Thyroid gland (tissue), 4 donors: ENCODE measurements at regions of chr11 and their contacts with region 1.

Region 1: DNA sequence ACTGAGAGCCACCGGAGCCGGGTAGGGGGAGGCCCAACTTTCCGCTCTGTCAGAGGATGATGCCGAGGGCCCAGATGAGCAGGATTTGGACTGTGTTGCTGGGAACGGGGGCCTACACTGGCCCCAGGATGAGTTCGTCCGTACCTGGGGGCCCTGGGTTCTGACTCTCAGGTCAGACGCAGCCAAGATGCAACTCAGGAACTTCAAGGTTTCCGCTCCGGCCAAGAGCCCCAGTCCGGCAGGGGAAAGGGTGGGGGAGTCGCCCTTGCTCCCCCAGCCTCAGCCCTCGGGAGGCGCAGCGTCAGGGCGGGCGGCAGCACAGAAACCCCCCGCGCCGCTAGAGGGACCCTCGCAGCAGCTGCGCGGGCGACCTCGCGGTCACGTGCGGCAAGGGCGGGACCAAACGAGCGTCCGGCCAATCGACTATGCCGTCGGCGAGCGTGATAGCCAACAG is 241 bp upstream of the ARL2 start:
- DNase-seq: peak; percentile 86 to 90
- H3K4me3 ChIP-seq: peak overlapping the region; percentile 78 to 89 (median 87)
- H3K27ac ChIP-seq: peak overlapping the region; percentile 94 to 99 (median 95)
- H3K4me1 ChIP-seq: peaks cover 11 to 13% of the 10 kb centered on the region in 2 donors
- H3K27me3 ChIP-seq: no peaks in the 10 kb centered on the region
- CTCF ChIP-seq: peak in 3 of 6 experiments; percentile 50 to 81 (median 61)
- POLR2A ChIP-seq: peak in 1 of 2 donors; percentile 59

Region 2: DNA sequence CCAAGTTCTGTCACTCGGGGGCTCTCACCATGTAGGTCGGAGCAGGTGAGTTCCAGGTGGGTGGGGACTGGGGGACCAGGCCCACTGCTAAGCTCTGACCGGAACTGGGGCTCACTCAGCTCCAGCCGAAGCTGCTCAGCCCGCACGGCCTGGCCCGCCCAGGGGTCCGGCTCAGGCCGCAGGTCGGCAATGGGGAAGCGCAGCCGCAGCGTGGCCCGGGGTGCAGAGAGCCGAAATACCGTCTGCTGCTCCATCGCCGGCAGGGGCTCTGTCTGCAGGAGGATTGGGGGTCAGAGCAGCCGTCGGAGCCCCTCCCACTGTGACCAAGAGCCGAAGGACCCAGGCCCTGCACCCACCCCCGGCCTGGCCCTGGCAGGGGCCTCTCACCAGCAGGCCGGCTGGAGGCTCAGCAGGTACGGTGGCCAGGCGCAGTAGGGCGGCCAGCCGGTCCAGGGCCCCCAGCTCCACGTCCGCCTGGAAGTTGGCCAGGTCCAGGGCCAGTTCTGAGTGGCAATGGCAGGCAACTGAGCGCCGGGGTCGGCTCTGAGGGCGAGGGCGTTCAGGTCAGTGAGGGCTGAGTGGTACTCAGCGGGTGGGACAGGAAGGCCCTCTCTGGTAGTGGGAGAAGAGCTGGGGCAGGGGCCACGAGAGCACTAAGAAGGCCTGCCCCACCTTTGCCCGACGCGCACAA is 103.9 kb before region 1 on chr11:
- intact Hi-C with region 1: loop called (anchors 5 kb)
- DNase-seq: no peak
- H3K4me3 ChIP-seq: no peak overlapping the region
- H3K27ac ChIP-seq: no peak overlapping the region
- H3K4me1 ChIP-seq: no peaks in the 10 kb centered on the region
- H3K27me3 ChIP-seq: no peaks in the 10 kb centered on the region
- CTCF ChIP-seq: no peak
- POLR2A ChIP-seq: no peak

Region 3: GRCh38 chr11:65083834-65084597 is 70.3 kb after region 1 on chr11 and contains the starts of genes CDCA5 and ZFPL1:
- intact Hi-C with region 1: loop called (anchors 2 kb)
- DNase-seq: peak; percentile 94
- H3K4me3 ChIP-seq: peak within 1 kb of the TSS; percentile 44 to 82 (median 56)
- H3K27ac ChIP-seq: peak within 1 kb of the TSS; percentile 84 to 92 (median 87)
- H3K4me1 ChIP-seq: peaks cover 8 to 17% of the 10 kb centered on the region in 2 donors
- H3K27me3 ChIP-seq: no peaks in the 10 kb centered on the region
- CTCF ChIP-seq: no peak
- POLR2A ChIP-seq: peak in 1 of 2 donors; percentile 70
- total RNA-seq, gene CDCA5: 0.71 to 1.8 (median 0.81) TPM in 3 of 4 donors, not detected in the other
- total RNA-seq, gene ZFPL1: 28.3 to 74.4 (median 49.3) TPM

Region 4: GRCh38 chr11:65117216-65118096 is 103.7 kb after region 1 on chr11 and contains the start of gene ZNHIT2:
- intact Hi-C with region 1: loop called (anchors 10 kb)
- DNase-seq: peak; percentile 100
- H3K4me3 ChIP-seq: peak within 1 kb of the TSS; percentile 60 to 94 (median 75)
- H3K27ac ChIP-seq: peak within 1 kb of the TSS; percentile 61 to 86 (median 82)
- H3K4me1 ChIP-seq: peaks cover 35 to 47% of the 10 kb centered on the region in 2 donors
- H3K27me3 ChIP-seq: no peaks in the 10 kb centered on the region
- CTCF ChIP-seq: peak; percentile 77 to 97 (median 94)
- POLR2A ChIP-seq: peak in 1 of 2 donors; percentile 85
- total RNA-seq, gene ZNHIT2: 17.3 to 38.5 (median 25.9) TPM